Transverse colon (tissue), 4 donors: ENCODE measurements at regions of chr12 and their contacts with region 1.

Region 1: GRCh38 chr12:96617178-96617577 is 127.8 kb downstream of the CFAP54 start:
- DNase-seq: no peak
- H3K4me3 ChIP-seq: no peak overlapping the region
- H3K27ac ChIP-seq: no peak overlapping the region
- H3K4me1 ChIP-seq: no peaks in the 10 kb centered on the region
- H3K27me3 ChIP-seq: no peaks in the 10 kb centered on the region
- CTCF ChIP-seq: no peak
- EP300 ChIP-seq: no peak
- POLR2A ChIP-seq: no peak

Region 2: DNA sequence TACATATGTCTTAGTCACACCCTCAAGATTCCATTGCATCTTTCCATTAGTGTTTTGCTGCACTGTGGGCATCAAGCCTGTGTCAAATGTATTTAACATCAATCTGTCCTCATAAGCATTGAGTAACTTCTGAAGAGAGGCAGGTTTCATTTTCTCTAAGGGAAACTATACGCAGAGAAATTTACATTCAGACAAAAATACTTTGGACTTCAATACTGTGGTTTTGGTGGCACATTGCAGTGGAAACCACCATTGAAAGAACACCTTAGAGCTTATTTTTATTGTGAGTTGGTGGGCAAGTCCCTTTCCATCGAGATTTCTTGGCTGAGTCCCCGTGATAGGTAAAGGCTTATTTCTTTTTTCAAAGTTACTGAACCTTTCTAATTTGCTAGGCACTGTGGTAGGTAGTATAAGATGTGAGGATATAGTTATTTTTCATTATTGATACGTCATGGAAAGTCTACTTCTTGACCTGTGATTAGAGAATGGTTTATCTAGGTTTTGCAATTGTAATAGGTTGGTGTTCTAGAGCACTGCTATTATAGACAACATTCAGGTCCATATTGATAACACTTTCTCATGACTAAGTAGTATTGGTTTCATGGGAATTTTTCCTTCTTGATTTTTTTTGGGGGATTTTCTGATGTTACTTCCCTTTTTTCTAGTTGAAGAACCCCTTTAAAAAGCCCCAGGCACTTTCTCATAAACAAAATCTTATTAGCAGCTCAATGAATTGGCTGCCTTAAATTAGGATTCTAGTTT is 45.9 kb before region 1 on chr12:
- in situ Hi-C with region 1: no loop called
- intact Hi-C with region 1: no loop called
- DNase-seq: no peak
- H3K4me3 ChIP-seq: no peak overlapping the region
- H3K27ac ChIP-seq: no peak overlapping the region
- H3K4me1 ChIP-seq: no peaks in the 10 kb centered on the region
- H3K27me3 ChIP-seq: no peaks in the 10 kb centered on the region
- CTCF ChIP-seq: no peak
- EP300 ChIP-seq: no peak
- POLR2A ChIP-seq: no peak

Region 3: DNA sequence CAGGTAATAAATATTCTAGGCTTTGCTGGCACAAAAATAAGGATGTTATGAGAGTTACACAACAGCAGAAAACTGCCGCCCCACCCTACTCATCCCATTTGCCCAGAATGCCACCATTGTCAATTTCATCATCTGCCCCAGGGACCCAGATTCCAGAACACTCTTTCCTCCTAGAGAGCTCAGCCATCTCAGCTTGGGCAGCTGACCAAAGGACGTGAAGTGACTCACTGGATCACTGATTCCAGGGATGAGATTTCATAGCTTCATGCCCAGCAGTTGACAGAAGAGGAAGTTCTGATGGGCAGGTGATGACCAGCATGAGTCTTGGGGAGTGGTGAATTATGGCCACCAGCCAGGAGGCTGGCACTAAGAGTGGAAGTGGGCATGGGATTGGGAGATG is 1295.8 kb after region 1 on chr12:
- in situ Hi-C with region 1: no loop called
- intact Hi-C with region 1: loop called (anchors 5 kb)
- DNase-seq: no peak
- H3K4me3 ChIP-seq: no peak overlapping the region
- H3K27ac ChIP-seq: no peak overlapping the region
- H3K4me1 ChIP-seq: no peaks in the 10 kb centered on the region
- H3K27me3 ChIP-seq: no peaks in the 10 kb centered on the region
- CTCF ChIP-seq: no peak
- EP300 ChIP-seq: no peak
- POLR2A ChIP-seq: no peak